ENCODE measurements at regions of chr7 and their contacts with region 1.

Region 1: DNA sequence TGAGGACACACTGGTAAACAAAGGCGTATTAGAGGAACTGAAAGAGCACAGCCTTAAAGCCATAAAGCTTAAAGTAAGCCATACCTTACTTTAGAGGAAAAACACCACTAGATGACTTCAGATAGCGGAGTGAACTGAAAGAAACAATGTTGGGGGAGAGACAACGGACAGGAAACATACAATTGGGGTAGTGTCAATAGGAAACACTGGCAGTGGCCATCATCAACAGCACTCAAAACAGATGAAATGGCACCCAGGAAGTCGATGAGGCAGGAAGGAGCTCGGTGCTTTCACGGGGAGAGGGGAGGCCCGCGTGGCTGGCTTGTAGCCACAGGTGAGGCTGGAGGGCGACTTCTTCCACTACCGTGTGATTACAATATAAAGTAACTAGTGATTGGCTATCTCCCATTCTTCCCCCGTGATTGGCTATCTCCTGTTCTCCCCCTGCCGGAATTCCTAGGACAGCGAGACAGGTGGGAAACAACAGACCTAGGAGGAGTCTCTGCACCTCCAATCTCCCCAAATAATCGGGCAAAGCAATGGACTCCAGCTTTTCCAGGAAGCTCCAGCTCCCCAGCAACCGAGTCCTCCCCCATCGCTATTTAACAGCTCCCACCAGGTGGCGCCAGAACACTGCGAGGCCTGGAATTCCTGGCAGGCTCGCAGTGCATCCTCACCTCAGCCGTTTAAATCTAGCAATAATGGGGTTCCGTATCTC is 2.4 kb upstream of the TAS2R38 start:
- DNase-seq: peak; percentile 80
- H3K4me3 Mint-ChIP-seq: peak overlapping the region; percentile 70
- H3K27ac Mint-ChIP-seq: no peak overlapping the region
- H3K4me1 Mint-ChIP-seq: peaks cover 5% of the 10 kb centered on the region
- H3K27me3 Mint-ChIP-seq: no peaks in the 10 kb centered on the region

Region 2: DNA sequence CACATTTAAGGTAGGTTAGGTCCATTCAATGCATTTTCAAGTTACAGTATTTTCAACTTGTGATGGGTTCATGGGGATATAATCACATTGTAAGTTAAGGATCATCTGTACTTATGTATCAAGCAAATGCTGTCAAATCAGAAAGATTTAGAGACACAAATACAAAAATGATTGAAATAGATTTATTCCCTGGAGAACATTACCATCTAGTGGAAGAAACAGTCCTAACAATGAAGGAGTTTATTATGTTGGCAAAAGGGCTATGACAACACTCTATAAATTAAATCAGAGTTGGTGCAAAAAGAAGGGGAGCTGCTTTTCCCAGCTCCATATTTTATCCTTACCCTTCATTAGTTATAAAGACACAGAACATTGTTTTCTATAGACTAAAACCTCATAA is 212.9 kb after region 1 on chr7:
- CTCF ChIA-PET with region 1: interaction called, 4 read pairs
- POLR2A ChIA-PET with region 1: no interaction called
- intact Hi-C with region 1: loop called (anchors 2 kb)
- DNase-seq: no peak
- H3K4me3 Mint-ChIP-seq: no peak overlapping the region
- H3K27ac Mint-ChIP-seq: no peak overlapping the region
- H3K4me1 Mint-ChIP-seq: peaks cover 5% of the 10 kb centered on the region
- H3K27me3 Mint-ChIP-seq: peaks cover 4% of the 10 kb centered on the region

Region 3: GRCh38 chr7:142301923-142302550 is 326.1 kb after region 1 on chr7:
- CTCF ChIA-PET with region 1: interaction called, 40 read pairs
- POLR2A ChIA-PET with region 1: no interaction called
- intact Hi-C with region 1: loop called (anchors 1 kb)
- DNase-seq: no peak
- H3K4me3 Mint-ChIP-seq: no peak overlapping the region
- H3K27ac Mint-ChIP-seq: no peak overlapping the region
- H3K4me1 Mint-ChIP-seq: peaks cover 20% of the 10 kb centered on the region
- H3K27me3 Mint-ChIP-seq: peaks cover 10% of the 10 kb centered on the region